ENCODE measurements at regions of chr12 and their contacts with region 1.

Region 1: GRCh38 chr12:93325855-93326254 is 51.9 kb upstream of the NUDT4 start:
- DNase-seq: no peak
- H3K4me3 Mint-ChIP-seq: no peak overlapping the region
- H3K27ac Mint-ChIP-seq: no peak overlapping the region
- H3K4me1 Mint-ChIP-seq: no peaks in the 10 kb centered on the region
- H3K27me3 Mint-ChIP-seq: peaks cover 2% of the 10 kb centered on the region

Region 2: GRCh38 chr12:92796650-92797049 is 529.2 kb before region 1 on chr12:
- intact Hi-C with region 1: no loop called
- DNase-seq: no peak
- H3K4me3 Mint-ChIP-seq: no peak overlapping the region
- H3K27ac Mint-ChIP-seq: no peak overlapping the region
- H3K4me1 Mint-ChIP-seq: no peaks in the 10 kb centered on the region
- H3K27me3 Mint-ChIP-seq: no peaks in the 10 kb centered on the region

Region 3: DNA sequence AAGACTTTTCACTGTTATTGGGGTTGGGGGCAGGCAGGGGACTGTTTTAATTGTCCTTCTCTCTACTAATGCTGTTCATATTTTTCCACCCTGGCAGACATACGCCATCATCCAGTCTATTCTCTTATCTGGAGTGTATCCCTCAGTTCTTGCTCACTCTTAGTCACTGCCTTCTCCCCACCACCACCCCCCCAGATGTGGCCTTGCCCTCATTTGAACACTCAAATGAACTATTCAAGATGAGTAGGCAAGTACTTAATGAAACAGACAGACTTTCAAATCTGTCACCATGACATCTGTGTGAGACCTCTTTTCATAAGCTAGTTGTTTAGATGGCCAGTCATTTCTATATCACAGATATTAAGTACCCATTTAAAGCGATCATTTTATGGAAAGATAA is 61.9 kb after region 1 on chr12:
- intact Hi-C with region 1: loop called (anchors 2 kb)
- DNase-seq: no peak
- H3K4me3 Mint-ChIP-seq: no peak overlapping the region
- H3K27ac Mint-ChIP-seq: peak overlapping the region; percentile 26
- H3K4me1 Mint-ChIP-seq: peaks cover 30% of the 10 kb centered on the region
- H3K27me3 Mint-ChIP-seq: no peaks in the 10 kb centered on the region

Region 4: DNA sequence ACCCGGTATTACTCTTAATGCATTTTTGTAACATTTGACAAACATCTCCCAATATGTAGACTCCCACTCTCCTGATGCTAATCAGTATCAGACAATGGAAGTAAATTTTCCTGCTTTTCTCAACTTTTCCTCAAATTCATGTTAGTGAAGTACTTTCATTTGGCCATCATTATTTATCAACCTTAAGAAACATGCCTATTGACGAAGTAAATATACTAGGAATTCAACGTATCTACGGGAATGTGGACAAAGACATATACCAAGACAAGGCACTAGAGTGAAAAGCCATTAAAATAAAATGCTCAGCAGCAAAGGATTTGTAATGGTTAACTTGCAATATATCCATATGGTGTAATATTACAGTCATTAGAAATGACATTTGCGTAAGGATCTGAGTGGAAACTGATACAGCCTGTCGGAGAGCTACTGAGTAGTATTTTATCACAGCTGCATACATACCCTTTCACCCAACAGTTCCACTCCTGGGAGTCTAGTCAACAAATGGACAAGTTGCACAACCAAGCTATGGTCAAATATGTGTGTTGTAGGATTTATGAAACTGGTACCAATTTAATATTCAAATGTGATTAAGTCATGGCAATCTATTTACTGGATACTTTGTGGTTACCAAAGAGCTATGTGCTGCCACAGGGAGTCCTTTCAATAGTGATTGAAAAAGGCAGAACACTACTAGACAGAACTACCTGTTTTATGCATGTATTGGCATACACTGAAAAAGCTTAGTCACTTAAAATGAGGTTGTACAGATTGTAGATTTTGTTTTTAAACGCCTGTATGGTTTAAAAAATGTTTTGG is 78.3 kb after region 1 on chr12:
- intact Hi-C with region 1: no loop called
- DNase-seq: no peak
- H3K4me3 Mint-ChIP-seq: no peak overlapping the region
- H3K27ac Mint-ChIP-seq: peak overlapping the region; percentile 45
- H3K4me1 Mint-ChIP-seq: peaks cover 26% of the 10 kb centered on the region
- H3K27me3 Mint-ChIP-seq: no peaks in the 10 kb centered on the region